Activated CD8-positive, alpha-beta memory T cell treated with anti-CD3 and anti-CD28 coated beads, Interleukin-2, amount 10 ng/mL, durations not matched to agents 7 days and 5 days (primary cell): ENCODE measurements at regions of chr11 and their contacts with region 1.

Region 1: DNA sequence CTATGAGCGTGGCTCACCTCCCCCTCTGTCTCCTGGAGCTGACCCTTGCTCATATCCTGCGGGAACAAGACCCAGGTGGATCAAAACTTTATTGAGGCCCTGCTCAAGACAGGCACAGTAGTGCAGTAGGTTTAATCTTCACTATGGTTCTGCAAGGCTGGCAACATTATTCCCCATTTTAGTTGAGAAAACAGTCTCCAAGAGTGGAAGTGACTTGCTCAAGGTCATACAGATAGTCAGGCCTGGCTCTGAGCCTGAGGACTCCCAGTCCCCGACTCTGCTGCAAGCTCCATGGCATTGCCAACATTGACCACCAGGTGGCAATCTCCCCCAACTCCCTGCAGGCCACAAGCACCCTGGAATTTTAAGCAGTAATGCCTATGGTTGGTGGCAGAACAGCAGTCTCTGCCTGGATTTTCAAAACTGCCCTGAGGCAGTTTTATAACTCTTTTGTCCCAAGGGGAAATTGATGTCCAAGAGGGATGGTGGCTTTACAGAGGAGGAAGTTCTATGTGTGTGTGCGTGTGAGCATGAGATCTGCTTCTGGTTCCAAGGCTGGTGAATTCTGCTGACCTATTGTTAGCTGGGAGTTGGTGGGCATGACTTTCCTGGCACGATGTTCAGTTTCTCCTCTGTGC is 34.1 kb downstream of the NEU3 start:
- DNase-seq: peak; percentile 81
- ATAC-seq: peak; percentile 94
- H3K4me3 Mint-ChIP-seq: no peak overlapping the region
- H3K27ac Mint-ChIP-seq: no peak overlapping the region
- H3K4me1 Mint-ChIP-seq: no peaks in the 10 kb centered on the region
- H3K27me3 Mint-ChIP-seq: no peaks in the 10 kb centered on the region

Region 2: DNA sequence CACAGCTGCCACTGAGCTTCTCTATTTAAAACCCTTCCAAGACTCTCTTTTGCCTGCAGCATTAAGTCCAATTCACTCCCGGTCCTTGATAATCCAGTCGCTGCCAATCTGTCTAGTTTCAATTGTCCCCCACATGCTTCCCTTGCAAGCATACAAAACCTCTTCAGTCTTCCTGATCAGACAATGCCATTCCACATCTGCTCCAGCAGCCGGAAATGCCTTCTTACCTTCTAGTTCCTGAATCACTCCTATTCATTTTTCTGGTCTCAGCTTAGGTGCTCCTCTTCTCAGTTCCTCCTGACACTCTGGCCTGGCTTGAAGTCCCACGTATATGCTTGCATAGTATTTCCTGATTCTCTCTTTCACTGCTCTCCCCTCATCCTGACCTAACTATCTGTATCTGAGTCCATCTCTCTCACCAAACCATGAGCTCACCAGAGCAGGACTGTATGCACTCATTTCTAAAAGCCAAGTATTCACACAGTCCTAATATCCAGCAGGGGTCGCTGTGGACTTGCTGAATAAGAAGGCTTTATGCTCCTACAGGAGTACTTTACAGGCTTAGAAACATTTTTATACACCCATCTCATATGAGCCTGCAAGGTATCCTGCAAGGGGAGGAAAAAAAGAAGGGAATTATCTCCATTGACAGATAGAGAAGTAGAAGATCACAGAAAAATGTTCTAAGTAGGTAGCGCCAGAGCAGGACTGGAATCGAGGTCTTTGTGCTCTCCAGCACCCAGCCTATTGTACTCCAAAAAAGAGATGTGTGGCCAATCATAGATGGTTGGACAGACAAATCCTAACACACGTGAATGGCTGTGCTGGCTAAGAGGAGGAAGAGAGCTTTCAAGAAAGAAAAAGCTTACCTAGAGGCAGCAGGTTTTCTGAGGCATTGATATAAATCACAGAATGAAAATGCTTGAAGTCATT is 93.2 kb before region 1 on chr11:
- CTCF ChIA-PET with region 1: interaction called, 27 read pairs
- DNase-seq: peak; percentile 80
- ATAC-seq: peak; percentile 66
- H3K4me3 Mint-ChIP-seq: no peak overlapping the region
- H3K27ac Mint-ChIP-seq: no peak overlapping the region
- H3K4me1 Mint-ChIP-seq: peaks cover 54% of the 10 kb centered on the region
- H3K27me3 Mint-ChIP-seq: no peaks in the 10 kb centered on the region

Region 3: GRCh38 chr11:74988541-74989260 is 34.2 kb before region 1 on chr11 and contains the start of gene NEU3:
- CTCF ChIA-PET with region 1: interaction called, 10 read pairs
- DNase-seq: peak; percentile 92
- ATAC-seq: peak; percentile 97
- H3K4me3 Mint-ChIP-seq: peak within 1 kb of the TSS; percentile 97
- H3K27ac Mint-ChIP-seq: peak within 1 kb of the TSS; percentile 95
- H3K4me1 Mint-ChIP-seq: peaks cover 31% of the 10 kb centered on the region
- H3K27me3 Mint-ChIP-seq: no peaks in the 10 kb centered on the region
- total RNA-seq, gene NEU3: 14.2 to 20.0 TPM

Region 4: GRCh38 chr11:75002516-75002915 is 20.4 kb before region 1 on chr11:
- CTCF ChIA-PET with region 1: interaction called, 20 read pairs
- DNase-seq: no peak
- ATAC-seq: no peak
- H3K4me3 Mint-ChIP-seq: no peak overlapping the region
- H3K27ac Mint-ChIP-seq: no peak overlapping the region
- H3K4me1 Mint-ChIP-seq: peaks cover 8% of the 10 kb centered on the region
- H3K27me3 Mint-ChIP-seq: no peaks in the 10 kb centered on the region

Region 5: DNA sequence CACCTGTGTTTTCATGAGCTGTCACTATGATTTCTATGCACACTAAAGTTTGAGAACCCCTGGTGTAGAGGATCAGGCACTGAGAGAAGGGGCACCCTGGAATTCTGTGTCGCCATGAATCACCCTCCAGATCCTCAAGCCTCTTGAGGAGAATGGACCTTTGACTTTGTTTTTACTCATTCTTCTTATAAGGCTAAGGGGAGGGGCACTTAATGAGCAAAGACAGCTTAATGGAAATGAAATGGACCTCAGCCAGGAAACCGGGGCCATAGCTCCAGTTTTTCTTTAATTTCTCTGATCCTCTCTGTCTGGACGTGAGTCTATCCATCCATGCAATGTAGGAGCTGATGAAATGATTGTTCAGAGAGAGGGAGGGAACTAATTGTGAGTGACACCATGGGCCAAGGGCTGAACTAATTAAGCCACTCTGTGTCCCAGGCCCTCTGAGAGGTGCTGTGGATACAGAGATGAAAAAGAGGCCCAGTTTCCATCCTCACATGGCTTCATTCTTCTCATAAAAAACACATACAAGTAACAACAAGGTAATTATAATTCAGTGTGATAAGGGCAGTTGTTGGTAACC is 40.9 kb after region 1 on chr11:
- CTCF ChIA-PET with region 1: no interaction called
- DNase-seq: no peak
- ATAC-seq: no peak
- H3K4me3 Mint-ChIP-seq: no peak overlapping the region
- H3K27ac Mint-ChIP-seq: no peak overlapping the region
- H3K4me1 Mint-ChIP-seq: no peaks in the 10 kb centered on the region
- H3K27me3 Mint-ChIP-seq: peaks cover 41% of the 10 kb centered on the region

Region 6: DNA sequence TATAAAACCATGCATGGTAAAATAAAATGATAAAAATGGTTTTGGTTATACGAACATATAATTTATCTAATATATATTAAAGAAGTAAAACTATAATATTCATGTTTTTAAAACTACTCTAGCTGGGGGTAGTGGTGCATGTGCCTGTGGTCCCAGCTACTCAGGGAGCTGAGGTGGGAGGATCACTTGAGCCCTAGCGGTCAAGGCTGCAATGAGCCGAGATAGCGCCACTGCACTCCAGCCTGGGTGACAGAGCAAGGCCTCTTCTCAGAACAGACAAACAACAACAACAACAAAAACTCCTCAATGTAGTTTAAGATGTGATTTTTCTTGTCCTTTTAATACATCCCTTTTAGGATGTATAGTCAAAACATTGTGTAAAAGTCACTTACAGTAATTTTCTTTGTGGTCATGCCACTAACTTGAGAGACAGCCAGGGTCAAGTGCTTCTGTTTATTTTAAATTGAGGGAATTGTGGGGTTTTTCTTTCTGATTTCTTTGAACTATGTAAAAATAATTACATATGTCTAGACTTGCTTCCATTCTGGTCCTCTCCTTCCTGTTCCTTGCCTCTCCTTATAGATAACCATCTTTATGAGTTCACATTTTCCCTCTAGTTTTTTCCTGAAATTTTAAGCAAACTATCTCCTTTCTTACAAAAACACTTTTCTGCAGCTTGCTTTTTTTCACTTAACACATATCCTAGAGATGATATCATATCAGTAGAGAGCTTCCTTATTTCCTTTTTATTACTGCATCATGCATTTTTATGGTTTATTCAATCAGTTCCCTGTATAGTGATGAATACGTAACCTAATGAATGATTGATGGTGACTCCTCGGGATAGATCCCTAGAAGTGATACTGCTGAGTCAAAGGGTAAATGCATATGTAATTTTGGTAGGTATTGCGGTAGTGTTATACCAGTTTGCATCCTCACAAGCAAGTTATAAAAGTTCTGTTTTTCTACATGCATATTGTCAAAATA is 64.7 kb after region 1 on chr11:
- CTCF ChIA-PET with region 1: no interaction called
- DNase-seq: no peak
- ATAC-seq: no peak
- H3K4me3 Mint-ChIP-seq: no peak overlapping the region
- H3K27ac Mint-ChIP-seq: no peak overlapping the region
- H3K4me1 Mint-ChIP-seq: peaks cover 4% of the 10 kb centered on the region
- H3K27me3 Mint-ChIP-seq: peaks cover 61% of the 10 kb centered on the region

Region 7: GRCh38 chr11:75204685-75205563 is 182.0 kb after region 1 on chr11:
- CTCF ChIA-PET with region 1: interaction called, 34 read pairs
- DNase-seq: peak; percentile 90
- ATAC-seq: peak; percentile 97
- H3K4me3 Mint-ChIP-seq: no peak overlapping the region
- H3K27ac Mint-ChIP-seq: no peak overlapping the region
- H3K4me1 Mint-ChIP-seq: no peaks in the 10 kb centered on the region
- H3K27me3 Mint-ChIP-seq: peaks cover 19% of the 10 kb centered on the region

Region 8: GRCh38 chr11:75241036-75241905 is 218.4 kb after region 1 on chr11:
- CTCF ChIA-PET with region 1: interaction called, 59 read pairs
- DNase-seq: peak; percentile 88
- ATAC-seq: peak; percentile 97
- H3K4me3 Mint-ChIP-seq: peak overlapping the region; percentile 63
- H3K27ac Mint-ChIP-seq: no peak overlapping the region
- H3K4me1 Mint-ChIP-seq: peaks cover 9% of the 10 kb centered on the region
- H3K27me3 Mint-ChIP-seq: peaks cover 71% of the 10 kb centered on the region

Region 9: GRCh38 chr11:75270896-75271418 is 248.1 kb after region 1 on chr11:
- CTCF ChIA-PET with region 1: interaction called, 11 read pairs
- DNase-seq: no peak
- ATAC-seq: no peak
- H3K4me3 Mint-ChIP-seq: no peak overlapping the region
- H3K27ac Mint-ChIP-seq: no peak overlapping the region
- H3K4me1 Mint-ChIP-seq: peaks cover 14% of the 10 kb centered on the region
- H3K27me3 Mint-ChIP-seq: no peaks in the 10 kb centered on the region